Activated CD4-positive, alpha-beta T cell treated with anti-CD3 and anti-CD28 coated beads for 36 hours (primary cell): ENCODE measurements at regions of chr10 and their contacts with region 1.

Region 1: DNA sequence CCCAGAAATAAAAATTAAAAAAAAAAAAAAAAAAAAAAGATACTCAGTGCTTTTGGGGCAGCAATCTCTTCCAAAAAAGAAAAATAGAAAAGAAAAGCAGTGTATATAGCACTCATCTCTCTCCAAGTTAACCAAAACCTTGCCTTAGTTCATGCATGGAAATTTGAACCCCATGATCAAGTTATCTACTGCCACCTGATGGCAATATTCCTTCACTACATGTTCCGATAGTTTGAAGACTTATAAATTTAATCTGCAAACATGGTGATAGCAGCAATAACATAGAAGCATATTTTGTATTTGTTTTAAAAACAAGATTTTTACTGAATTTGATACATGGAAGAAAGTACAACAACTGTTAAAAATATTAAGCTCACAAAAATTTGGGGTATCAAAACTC is 48.6 kb upstream of the SLIT1 start:
- DNase-seq: no peak
- ATAC-seq: no peak
- H3K4me3 Mint-ChIP-seq: no peak overlapping the region
- H3K27ac Mint-ChIP-seq: no peak overlapping the region
- H3K4me1 Mint-ChIP-seq: peaks cover 17% of the 10 kb centered on the region
- H3K27me3 Mint-ChIP-seq: no peaks in the 10 kb centered on the region

Region 2: DNA sequence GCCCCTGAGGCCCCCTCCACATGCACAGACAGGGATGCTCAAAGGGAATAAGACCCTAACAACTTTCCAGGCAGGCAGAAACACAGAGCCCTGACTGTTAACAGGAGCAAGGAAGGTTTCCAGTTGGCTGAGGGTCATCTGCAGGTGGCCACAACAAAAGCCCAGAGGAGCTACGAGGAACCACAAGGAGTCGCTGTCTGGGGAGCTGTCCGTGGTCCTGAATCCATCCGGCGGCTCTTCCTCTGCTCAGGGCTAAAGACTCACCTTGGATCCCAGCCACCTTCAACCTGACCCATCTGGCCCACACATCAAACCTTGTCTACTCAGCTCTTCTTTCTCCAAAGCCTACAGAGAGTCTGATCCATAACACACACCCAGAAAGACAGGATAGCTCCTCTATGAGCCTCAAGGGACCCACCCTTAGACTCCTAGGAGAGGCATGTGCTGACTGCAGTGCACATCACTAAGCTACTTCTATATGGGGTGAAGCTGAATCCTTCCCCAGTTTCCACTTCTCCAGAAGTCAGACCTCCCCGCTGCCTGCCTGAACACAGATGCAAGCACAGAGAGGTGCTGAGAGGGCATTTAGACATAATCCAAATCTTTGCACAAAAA is 152.7 kb before region 1 on chr10:
- CTCF ChIA-PET with region 1: interaction called, 13 read pairs
- POLR2A ChIA-PET with region 1: no interaction called
- intact Hi-C with region 1: no loop called
- DNase-seq: peak; percentile 83
- ATAC-seq: peak; percentile 73
- H3K4me3 Mint-ChIP-seq: no peak overlapping the region
- H3K27ac Mint-ChIP-seq: no peak overlapping the region
- H3K4me1 Mint-ChIP-seq: no peaks in the 10 kb centered on the region
- H3K27me3 Mint-ChIP-seq: peaks cover 20% of the 10 kb centered on the region

Region 3: GRCh38 chr10:97149079-97149531 is 85.3 kb before region 1 on chr10:
- CTCF ChIA-PET with region 1: no interaction called
- POLR2A ChIA-PET with region 1: no interaction called
- intact Hi-C with region 1: no loop called
- DNase-seq: no peak
- ATAC-seq: no peak
- H3K4me3 Mint-ChIP-seq: no peak overlapping the region
- H3K27ac Mint-ChIP-seq: no peak overlapping the region
- H3K4me1 Mint-ChIP-seq: no peaks in the 10 kb centered on the region
- H3K27me3 Mint-ChIP-seq: no peaks in the 10 kb centered on the region

Region 4: DNA sequence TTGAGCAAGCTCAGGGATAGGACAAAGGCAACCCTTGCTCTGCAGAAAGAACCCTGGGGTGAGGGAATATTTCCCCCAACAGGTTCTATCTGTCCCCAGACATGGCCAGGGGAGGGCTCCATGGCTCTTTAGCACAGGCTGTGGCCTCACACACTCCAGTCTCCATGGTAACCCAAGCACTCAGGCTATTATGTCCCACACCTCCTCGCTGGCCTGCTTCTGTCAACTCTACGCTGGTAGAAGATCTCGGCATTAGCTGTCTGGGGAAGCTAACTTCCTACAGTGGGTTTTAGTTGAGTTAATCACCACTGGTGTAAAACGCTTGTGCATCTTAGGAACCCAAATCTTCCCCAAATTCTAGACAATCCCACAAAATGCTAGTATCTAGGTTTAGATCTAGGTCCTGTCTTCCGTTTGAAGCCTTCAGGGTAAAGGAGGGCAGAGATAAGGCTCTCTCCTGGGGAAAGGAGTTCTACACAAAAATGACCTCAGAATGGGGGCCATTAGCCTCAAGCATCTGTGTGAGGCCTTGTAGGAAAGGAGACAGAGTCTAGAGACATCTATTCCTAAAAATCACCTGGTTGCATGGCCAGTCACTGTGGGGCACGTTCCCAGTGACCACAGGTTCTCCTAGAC is 12.0 kb before region 1 on chr10:
- CTCF ChIA-PET with region 1: interaction called, 16 read pairs
- POLR2A ChIA-PET with region 1: interaction called, 8 read pairs
- intact Hi-C with region 1: no loop called
- DNase-seq: no peak
- ATAC-seq: no peak
- H3K4me3 Mint-ChIP-seq: no peak overlapping the region
- H3K27ac Mint-ChIP-seq: no peak overlapping the region
- H3K4me1 Mint-ChIP-seq: peaks cover 27% of the 10 kb centered on the region
- H3K27me3 Mint-ChIP-seq: no peaks in the 10 kb centered on the region